CD8-positive, alpha-beta T cell (primary cell): ENCODE measurements at regions of chr5 and their contacts with region 1.

Region 1: GRCh38 chr5:66306105-66306843 is 162.2 kb downstream of the SREK1 start:
- DNase-seq: peak in 5 of 9 experiments; percentile 16 to 54 (median 43)
- ATAC-seq: peak; percentile 57
- H3K4me3 ChIP-seq: no peak overlapping the region
- H3K4me3 Mint-ChIP-seq: no peak overlapping the region
- H3K27ac ChIP-seq: no peak overlapping the region
- H3K27ac Mint-ChIP-seq: no peak overlapping the region
- H3K4me1 ChIP-seq: no peaks in the 10 kb centered on the region
- H3K4me1 Mint-ChIP-seq: peaks cover 3% of the 10 kb centered on the region
- H3K27me3 ChIP-seq: no peaks in the 10 kb centered on the region
- H3K27me3 Mint-ChIP-seq: peaks cover 6% of the 10 kb centered on the region
- CTCF ChIP-seq: peak; percentile 71

Region 2: DNA sequence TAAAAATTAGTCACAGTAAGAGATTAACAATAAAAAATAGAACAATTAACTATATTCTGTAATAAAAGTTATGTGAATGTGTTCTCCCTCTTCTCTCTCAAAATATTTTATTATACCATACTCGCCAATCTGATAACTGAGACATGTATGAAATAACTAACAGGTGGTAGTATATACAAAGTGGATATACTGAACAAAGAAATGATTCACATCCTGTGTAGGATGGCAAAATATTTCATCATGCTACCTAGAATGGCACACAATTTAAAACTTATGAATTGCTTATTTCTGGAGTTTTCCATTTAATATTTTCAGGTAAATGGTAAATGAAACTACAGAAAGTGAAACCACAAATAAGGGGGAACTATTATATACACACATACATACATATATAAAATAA is 1988.1 kb before region 1 on chr5:
- CTCF ChIA-PET with region 1: no interaction called
- POLR2A ChIA-PET with region 1: no interaction called
- intact Hi-C with region 1: no loop called
- DNase-seq: no peak
- ATAC-seq: no peak
- H3K4me3 ChIP-seq: no peak overlapping the region
- H3K4me3 Mint-ChIP-seq: no peak overlapping the region
- H3K27ac ChIP-seq: no peak overlapping the region
- H3K27ac Mint-ChIP-seq: no peak overlapping the region
- H3K4me1 ChIP-seq: no peaks in the 10 kb centered on the region
- H3K4me1 Mint-ChIP-seq: no peaks in the 10 kb centered on the region
- H3K27me3 ChIP-seq: no peaks in the 10 kb centered on the region
- H3K27me3 Mint-ChIP-seq: no peaks in the 10 kb centered on the region
- CTCF ChIP-seq: no peak

Region 3: GRCh38 chr5:65749956-65750355 is 556.3 kb before region 1 on chr5:
- CTCF ChIA-PET with region 1: interaction called, 3 read pairs
- POLR2A ChIA-PET with region 1: no interaction called
- intact Hi-C with region 1: loop called in 1 of 2 experiments (anchors 10 kb)
- DNase-seq: no peak
- ATAC-seq: no peak
- H3K4me3 ChIP-seq: no peak overlapping the region
- H3K4me3 Mint-ChIP-seq: no peak overlapping the region
- H3K27ac ChIP-seq: no peak overlapping the region
- H3K27ac Mint-ChIP-seq: no peak overlapping the region
- H3K4me1 ChIP-seq: no peaks in the 10 kb centered on the region
- H3K4me1 Mint-ChIP-seq: peaks cover 5% of the 10 kb centered on the region
- H3K27me3 ChIP-seq: no peaks in the 10 kb centered on the region
- H3K27me3 Mint-ChIP-seq: no peaks in the 10 kb centered on the region
- CTCF ChIP-seq: no peak

Region 4: GRCh38 chr5:66171349-66172344 is 134.6 kb before region 1 on chr5:
- CTCF ChIA-PET with region 1: no interaction called
- POLR2A ChIA-PET with region 1: no interaction called
- intact Hi-C with region 1: loop called in 1 of 2 experiments (anchors 5 kb)
- DNase-seq: peak in 8 of 9 experiments; percentile 31 to 84 (median 60)
- ATAC-seq: peak; percentile 83
- H3K4me3 ChIP-seq: no peak overlapping the region
- H3K4me3 Mint-ChIP-seq: no peak overlapping the region
- H3K27ac ChIP-seq: peak overlapping the region; percentile 4 to 16
- H3K27ac Mint-ChIP-seq: peak overlapping the region; percentile 15
- H3K4me1 ChIP-seq: peaks cover 7% of the 10 kb centered on the region
- H3K4me1 Mint-ChIP-seq: peaks cover 18% of the 10 kb centered on the region
- H3K27me3 ChIP-seq: no peaks in the 10 kb centered on the region
- H3K27me3 Mint-ChIP-seq: no peaks in the 10 kb centered on the region
- CTCF ChIP-seq: peak; percentile 66

Region 5: GRCh38 chr5:66324357-66324756 is 18.1 kb after region 1 on chr5:
- CTCF ChIA-PET with region 1: interaction called, 16 read pairs
- POLR2A ChIA-PET with region 1: no interaction called
- intact Hi-C with region 1: no loop called
- DNase-seq: no peak
- ATAC-seq: no peak
- H3K4me3 ChIP-seq: no peak overlapping the region
- H3K4me3 Mint-ChIP-seq: no peak overlapping the region
- H3K27ac ChIP-seq: no peak overlapping the region
- H3K27ac Mint-ChIP-seq: no peak overlapping the region
- H3K4me1 ChIP-seq: no peaks in the 10 kb centered on the region
- H3K4me1 Mint-ChIP-seq: no peaks in the 10 kb centered on the region
- H3K27me3 ChIP-seq: no peaks in the 10 kb centered on the region
- H3K27me3 Mint-ChIP-seq: peaks cover 11% of the 10 kb centered on the region
- CTCF ChIP-seq: no peak

Region 6: DNA sequence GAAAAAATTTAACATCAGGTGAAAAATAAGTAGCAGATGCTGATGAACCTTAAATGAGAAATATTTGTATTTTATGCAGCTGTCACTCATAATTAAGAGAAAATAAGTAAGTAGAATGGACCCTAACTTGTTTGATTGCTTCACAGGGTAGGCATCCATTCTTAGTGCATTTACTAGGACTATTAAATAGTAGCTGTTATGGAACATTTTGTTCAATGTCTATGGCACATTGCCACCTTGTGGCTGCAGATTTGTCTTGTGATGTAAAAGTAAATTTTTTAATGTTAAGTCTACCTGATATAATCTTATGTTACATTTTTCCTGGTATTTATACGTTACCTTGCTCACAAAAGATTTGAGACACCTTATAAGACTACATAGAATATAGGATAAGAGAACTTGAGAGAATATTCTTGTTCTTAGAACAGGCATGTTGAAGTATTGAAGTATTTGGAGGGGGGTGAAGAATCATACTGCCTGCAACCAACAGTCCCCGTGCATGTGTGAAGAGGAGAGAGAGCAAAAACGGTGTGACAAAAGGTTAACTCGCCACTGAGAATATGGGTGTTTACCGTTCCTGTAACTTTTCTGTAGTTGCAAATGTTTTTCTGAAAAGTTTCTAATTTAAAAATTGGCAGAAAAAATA is 451.0 kb after region 1 on chr5:
- CTCF ChIA-PET with region 1: interaction called, 3 read pairs
- POLR2A ChIA-PET with region 1: no interaction called
- intact Hi-C with region 1: loop called in 1 of 2 experiments (anchors 2 kb)
- DNase-seq: peak in 4 of 9 experiments; percentile 13 to 53 (median 31)
- ATAC-seq: no peak
- H3K4me3 ChIP-seq: no peak overlapping the region
- H3K4me3 Mint-ChIP-seq: no peak overlapping the region
- H3K27ac ChIP-seq: no peak overlapping the region
- H3K27ac Mint-ChIP-seq: no peak overlapping the region
- H3K4me1 ChIP-seq: no peaks in the 10 kb centered on the region
- H3K4me1 Mint-ChIP-seq: no peaks in the 10 kb centered on the region
- H3K27me3 ChIP-seq: no peaks in the 10 kb centered on the region
- H3K27me3 Mint-ChIP-seq: peaks cover 13% of the 10 kb centered on the region
- CTCF ChIP-seq: peak; percentile 36